ENCODE measurements at regions of chr20 and their contacts with region 1.

Region 1: DNA sequence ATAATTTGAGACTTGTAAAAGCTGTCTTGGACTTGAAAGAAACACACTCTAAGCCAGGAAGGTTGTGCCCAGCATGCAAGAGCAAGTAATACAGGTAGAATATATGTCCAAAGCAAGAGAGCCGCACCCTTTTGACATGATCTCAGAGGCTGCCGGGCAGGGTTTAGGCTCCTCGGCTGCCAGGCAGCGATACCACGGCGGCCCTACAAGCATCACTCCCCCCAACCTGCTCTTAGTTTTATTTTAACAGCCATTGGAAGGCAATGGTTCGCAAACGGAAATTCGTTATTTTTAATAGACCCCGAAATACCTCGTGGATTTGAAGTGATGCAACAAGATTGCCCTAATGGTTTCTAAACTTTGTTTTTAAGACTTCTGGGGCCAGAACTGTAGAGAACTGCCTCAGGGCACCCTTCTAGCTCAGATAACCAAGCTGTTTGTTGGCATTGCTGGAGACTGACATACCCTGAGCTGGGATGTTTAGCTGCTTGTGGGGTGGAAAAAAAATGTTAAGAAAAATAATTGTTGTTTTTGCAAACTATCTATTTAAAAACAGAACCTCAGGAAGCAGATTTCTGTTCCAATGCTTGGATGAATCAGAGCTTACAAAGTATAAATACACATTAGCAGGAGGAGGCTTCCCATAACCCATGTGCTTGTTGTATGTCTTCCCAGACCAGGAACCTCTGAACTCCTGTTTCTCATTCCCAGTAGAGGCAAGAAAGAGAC is 39.0 kb downstream of the JAG1 start:
- DNase-seq: no peak
- ATAC-seq: no peak
- H3K4me3 ChIP-seq: no peak overlapping the region
- H3K27ac ChIP-seq: peak overlapping the region; percentile 37 to 66 (median 62)
- H3K4me1 ChIP-seq: peaks cover 17 to 25% of the 10 kb centered on the region in 2 donors
- H3K27me3 ChIP-seq: no peaks in the 10 kb centered on the region
- CTCF ChIP-seq: no peak
- POLR2A ChIP-seq: no peak

Region 2: GRCh38 chr20:10558635-10559187 is 76.1 kb before region 1 on chr20:
- in situ Hi-C with region 1: no loop called
- intact Hi-C with region 1: loop called (anchors 2 kb)
- DNase-seq: no peak
- ATAC-seq: no peak
- H3K4me3 ChIP-seq: no peak overlapping the region
- H3K27ac ChIP-seq: peak overlapping the region in 2 of 4 donors; percentile 10 to 38
- H3K4me1 ChIP-seq: no peaks in the 10 kb centered on the region
- H3K27me3 ChIP-seq: no peaks in the 10 kb centered on the region
- CTCF ChIP-seq: no peak
- POLR2A ChIP-seq: no peak

Region 3: DNA sequence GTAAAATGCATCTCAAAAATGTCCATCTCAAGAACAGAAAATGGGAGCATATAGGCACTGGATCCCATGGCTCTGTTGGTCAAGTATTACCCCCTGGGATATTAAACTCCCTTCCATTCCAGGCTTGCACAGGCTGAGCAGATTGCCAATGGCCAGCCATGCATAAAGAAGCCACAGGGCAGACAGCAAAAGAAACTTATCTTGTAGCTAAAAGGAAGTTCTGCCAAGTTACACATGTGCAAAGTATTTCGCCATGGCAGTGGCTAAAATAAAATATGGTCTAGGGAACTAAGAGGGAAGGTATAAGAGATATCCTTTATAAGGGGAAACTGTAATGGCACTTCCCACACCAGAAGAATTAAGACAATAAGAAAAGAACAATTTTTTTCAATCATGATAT is 867.2 kb after region 1 on chr20:
- in situ Hi-C with region 1: no loop called
- intact Hi-C with region 1: no loop called
- DNase-seq: no peak
- ATAC-seq: no peak
- H3K4me3 ChIP-seq: no peak overlapping the region
- H3K27ac ChIP-seq: no peak overlapping the region
- H3K4me1 ChIP-seq: no peaks in the 10 kb centered on the region
- H3K27me3 ChIP-seq: no peaks in the 10 kb centered on the region
- CTCF ChIP-seq: no peak
- POLR2A ChIP-seq: no peak